MCF 10A (cell line): ENCODE measurements at regions of chrX and their contacts with region 1.

Region 1: DNA sequence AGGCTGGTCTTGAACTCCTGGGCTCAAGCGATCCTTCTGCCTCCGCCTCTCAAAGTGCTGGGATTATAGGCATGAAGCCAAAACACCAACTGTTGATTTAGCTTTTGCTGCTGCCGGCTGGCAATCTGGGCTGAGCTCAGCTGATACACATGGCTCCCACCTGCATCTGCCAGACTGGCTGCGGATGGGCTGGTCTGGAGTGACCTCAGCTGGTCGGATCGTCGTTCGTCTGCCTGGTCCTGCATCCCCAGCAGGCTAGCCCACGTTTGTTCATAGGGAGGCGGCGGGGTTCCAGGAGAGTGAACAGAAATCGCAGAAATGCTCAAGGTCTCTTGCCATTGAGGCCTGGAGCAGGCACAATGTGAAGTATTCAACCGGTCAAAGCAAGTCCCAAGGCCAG is 74.4 kb upstream of the DDX3X start:
- DNase-seq: no peak
- H3K4me3 Mint-ChIP-seq: no peak overlapping the region
- H3K27ac Mint-ChIP-seq: no peak overlapping the region
- H3K4me1 Mint-ChIP-seq: no peaks in the 10 kb centered on the region
- H3K27me3 Mint-ChIP-seq: peaks cover 31% of the 10 kb centered on the region
- CTCF ChIP-seq: no peak

Region 2: GRCh38 chrX:40809210-40809609 is 450.3 kb before region 1 on chrX:
- CTCF ChIA-PET with region 1: no interaction called
- POLR2A ChIA-PET with region 1: no interaction called
- intact Hi-C with region 1: loop called (anchors 10 kb)
- DNase-seq: peak; percentile 24
- H3K4me3 Mint-ChIP-seq: no peak overlapping the region
- H3K27ac Mint-ChIP-seq: no peak overlapping the region
- H3K4me1 Mint-ChIP-seq: no peaks in the 10 kb centered on the region
- H3K27me3 Mint-ChIP-seq: peaks cover 49% of the 10 kb centered on the region
- CTCF ChIP-seq: no peak

Region 3: DNA sequence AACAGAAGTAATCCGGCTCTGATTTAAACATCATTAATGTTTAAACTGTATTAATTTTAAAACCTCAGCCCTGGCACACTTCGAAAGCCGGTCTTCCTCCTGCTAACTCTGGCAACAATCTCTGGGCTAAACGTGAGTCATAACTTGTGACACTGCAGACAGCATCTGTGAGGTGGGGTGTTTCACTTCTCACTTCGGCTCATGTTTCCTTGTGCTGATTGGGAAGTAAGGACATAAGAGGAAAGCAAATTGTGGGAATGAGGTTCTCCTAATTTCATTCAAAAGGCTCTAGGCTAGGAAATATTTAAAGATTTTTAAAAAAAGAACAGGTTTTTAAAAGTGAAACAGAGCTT is 314.2 kb before region 1 on chrX:
- CTCF ChIA-PET with region 1: no interaction called
- POLR2A ChIA-PET with region 1: no interaction called
- intact Hi-C with region 1: no loop called
- DNase-seq: peak; percentile 84
- H3K4me3 Mint-ChIP-seq: no peak overlapping the region
- H3K27ac Mint-ChIP-seq: peak overlapping the region; percentile 22
- H3K4me1 Mint-ChIP-seq: peaks cover 15% of the 10 kb centered on the region
- H3K27me3 Mint-ChIP-seq: peaks cover 55% of the 10 kb centered on the region
- CTCF ChIP-seq: no peak

Region 4: GRCh38 chrX:40960041-40960440 is 299.5 kb before region 1 on chrX:
- CTCF ChIA-PET with region 1: no interaction called
- POLR2A ChIA-PET with region 1: no interaction called
- intact Hi-C with region 1: no loop called
- DNase-seq: no peak
- H3K4me3 Mint-ChIP-seq: no peak overlapping the region
- H3K27ac Mint-ChIP-seq: no peak overlapping the region
- H3K4me1 Mint-ChIP-seq: no peaks in the 10 kb centered on the region
- H3K27me3 Mint-ChIP-seq: peaks cover 43% of the 10 kb centered on the region
- CTCF ChIP-seq: no peak

Region 5: DNA sequence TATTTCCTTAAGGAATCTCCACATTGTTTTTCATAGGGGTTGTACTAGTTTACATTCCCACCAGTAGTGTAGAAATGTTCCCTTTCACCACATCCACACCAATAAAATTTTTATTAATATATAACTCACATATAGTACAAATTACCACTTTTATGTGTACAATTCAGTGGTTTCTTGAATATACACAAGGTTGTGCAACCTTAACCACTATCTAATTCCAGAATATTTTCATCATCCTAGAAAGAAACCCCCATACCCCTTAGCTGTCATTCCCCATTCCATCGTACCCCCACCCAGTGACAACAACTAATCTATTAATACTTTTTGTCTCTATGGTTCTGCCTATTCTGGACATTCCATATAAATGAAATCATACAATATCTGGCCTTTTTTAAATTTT is 282.5 kb before region 1 on chrX:
- CTCF ChIA-PET with region 1: no interaction called
- POLR2A ChIA-PET with region 1: no interaction called
- intact Hi-C with region 1: no loop called
- DNase-seq: no peak
- H3K4me3 Mint-ChIP-seq: no peak overlapping the region
- H3K27ac Mint-ChIP-seq: no peak overlapping the region
- H3K4me1 Mint-ChIP-seq: peaks cover 5% of the 10 kb centered on the region
- H3K27me3 Mint-ChIP-seq: peaks cover 72% of the 10 kb centered on the region
- CTCF ChIP-seq: no peak

Region 6: GRCh38 chrX:41137589-41137988 is 121.9 kb before region 1 on chrX:
- CTCF ChIA-PET with region 1: interaction called, 15 read pairs
- POLR2A ChIA-PET with region 1: no interaction called
- intact Hi-C with region 1: no loop called
- DNase-seq: no peak
- H3K4me3 Mint-ChIP-seq: no peak overlapping the region
- H3K27ac Mint-ChIP-seq: no peak overlapping the region
- H3K4me1 Mint-ChIP-seq: no peaks in the 10 kb centered on the region
- H3K27me3 Mint-ChIP-seq: no peaks in the 10 kb centered on the region
- CTCF ChIP-seq: peak; percentile 50

Region 7: DNA sequence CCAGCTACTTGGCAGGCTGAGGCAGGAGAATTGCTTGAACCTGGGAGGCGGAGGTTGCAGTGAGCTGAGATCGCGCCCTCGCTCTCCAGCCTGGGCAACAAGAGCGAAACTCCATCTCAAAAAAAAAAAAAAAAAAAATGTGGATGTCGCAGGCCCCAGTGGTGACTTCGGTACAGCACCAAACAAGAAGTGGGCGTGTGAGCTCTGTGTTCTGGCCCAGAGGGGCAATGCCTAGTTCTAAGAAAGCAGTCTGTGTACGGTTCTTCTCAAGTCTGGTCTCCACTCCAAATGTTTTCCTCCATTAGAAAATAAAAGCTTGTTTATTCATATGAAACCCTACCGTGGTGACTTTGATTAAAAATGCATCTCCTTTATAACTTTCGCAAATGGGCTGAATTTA is 17.6 kb before region 1 on chrX:
- CTCF ChIA-PET with region 1: interaction called, 12 read pairs
- POLR2A ChIA-PET with region 1: interaction called, 4 read pairs
- intact Hi-C with region 1: no loop called
- DNase-seq: no peak
- H3K4me3 Mint-ChIP-seq: no peak overlapping the region
- H3K27ac Mint-ChIP-seq: no peak overlapping the region
- H3K4me1 Mint-ChIP-seq: peaks cover 4% of the 10 kb centered on the region
- H3K27me3 Mint-ChIP-seq: no peaks in the 10 kb centered on the region
- CTCF ChIP-seq: no peak

Region 8: DNA sequence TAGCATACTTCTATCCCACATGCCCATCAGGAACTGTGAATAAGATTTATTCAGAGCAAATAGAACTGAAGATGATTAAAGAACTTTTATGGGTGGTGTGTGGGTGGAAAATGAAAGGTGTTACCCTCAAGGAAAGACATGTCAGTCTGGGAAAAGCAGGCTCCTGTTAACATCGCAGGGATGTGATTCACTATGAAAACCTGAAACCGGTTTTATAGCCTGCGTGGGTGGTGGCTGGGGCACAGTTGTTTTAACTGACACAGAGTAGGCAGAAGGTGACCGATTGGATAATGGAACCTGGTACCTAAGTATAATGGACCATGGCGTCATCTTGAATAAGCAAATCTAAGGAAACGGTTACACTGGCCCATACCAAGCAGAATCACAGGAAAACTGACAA is 725.1 kb after region 1 on chrX:
- CTCF ChIA-PET with region 1: no interaction called
- POLR2A ChIA-PET with region 1: no interaction called
- intact Hi-C with region 1: no loop called
- DNase-seq: peak; percentile 57
- H3K4me3 Mint-ChIP-seq: no peak overlapping the region
- H3K27ac Mint-ChIP-seq: no peak overlapping the region
- H3K4me1 Mint-ChIP-seq: peaks cover 5% of the 10 kb centered on the region
- H3K27me3 Mint-ChIP-seq: peaks cover 52% of the 10 kb centered on the region
- CTCF ChIP-seq: no peak